Posterior vena cava (tissue), 2 donors: ENCODE measurements at regions of chr1 and their contacts with region 1.

Region 1: GRCh38 chr1:149945206-149945605 is 8.5 kb upstream of the MTMR11 start:
- DNase-seq: no peak

Region 2: DNA sequence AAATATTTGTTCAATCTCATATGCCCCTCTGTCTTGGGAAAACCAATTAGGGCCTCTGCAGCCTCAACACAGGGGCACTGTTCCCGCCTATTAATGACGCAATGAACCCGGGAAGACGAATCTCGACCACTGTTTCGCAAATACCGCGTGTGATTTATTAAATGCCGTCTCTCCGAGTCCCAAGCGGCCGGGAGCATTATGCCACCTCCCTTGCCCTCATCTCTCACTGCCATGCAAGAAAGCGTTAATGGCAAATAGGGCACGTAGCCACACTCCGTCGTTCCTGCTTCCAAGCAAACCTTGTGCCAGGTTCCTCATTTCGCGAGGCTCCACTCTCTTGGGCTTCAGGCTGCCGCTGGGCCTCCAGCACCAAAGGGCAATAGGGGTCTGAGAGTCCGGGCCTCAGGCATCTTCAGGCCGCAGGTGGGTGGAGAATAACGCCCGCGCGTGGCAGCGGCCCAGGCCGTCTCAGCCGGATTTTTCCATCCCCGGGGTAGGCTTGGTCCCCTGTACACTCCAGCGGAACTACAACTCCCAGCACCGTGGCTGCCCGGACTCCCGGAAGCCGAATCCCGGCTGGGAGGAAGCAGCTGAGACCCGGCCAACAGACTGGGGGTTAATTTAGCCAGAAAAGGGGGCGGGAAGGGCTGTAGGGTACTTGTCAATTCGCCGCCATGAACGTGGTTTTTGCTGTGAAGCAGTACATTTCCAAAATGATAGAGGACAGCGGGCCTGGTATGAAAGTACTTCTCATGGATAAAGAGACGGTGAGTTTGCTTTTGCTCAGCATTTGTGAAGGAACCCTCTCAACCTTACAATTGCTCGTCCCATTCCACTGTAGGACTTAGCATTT is 122.2 kb after region 1 on chr1 and contains the start of gene VPS45:
- intact Hi-C with region 1: no loop called
- DNase-seq: peak; percentile 97
- total RNA-seq, gene VPS45: 42.1 to 44.1 TPM

Region 3: DNA sequence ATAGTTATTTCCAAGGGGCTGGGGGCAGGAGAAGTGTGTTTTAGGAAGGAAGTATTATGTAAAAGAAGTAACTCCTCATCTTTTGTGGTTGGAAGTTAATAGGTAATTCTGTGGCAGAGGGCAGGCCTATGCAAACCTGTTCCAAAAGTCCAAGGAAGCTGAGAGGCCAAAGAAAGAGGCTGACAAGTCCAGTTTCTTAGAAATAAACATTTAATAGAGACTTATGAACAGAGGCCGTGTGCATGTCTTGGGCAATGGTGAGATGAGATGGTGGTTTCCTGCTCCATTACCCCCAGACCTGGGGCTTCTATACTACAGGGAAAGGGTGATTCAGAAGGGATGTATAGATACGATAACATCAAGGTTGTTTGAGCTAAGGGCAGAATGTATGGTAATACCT is 304.7 kb after region 1 on chr1:
- intact Hi-C with region 1: loop called in 1 of 2 experiments (anchors 5 kb)
- DNase-seq: no peak

Region 4: GRCh38 chr1:150813058-150813707 is 868.0 kb after region 1 on chr1:
- intact Hi-C with region 1: no loop called
- DNase-seq: peak; percentile 89